OCI-LY7 (cell line): ENCODE measurements at regions of chr10 and their contacts with region 1.

Region 1: DNA sequence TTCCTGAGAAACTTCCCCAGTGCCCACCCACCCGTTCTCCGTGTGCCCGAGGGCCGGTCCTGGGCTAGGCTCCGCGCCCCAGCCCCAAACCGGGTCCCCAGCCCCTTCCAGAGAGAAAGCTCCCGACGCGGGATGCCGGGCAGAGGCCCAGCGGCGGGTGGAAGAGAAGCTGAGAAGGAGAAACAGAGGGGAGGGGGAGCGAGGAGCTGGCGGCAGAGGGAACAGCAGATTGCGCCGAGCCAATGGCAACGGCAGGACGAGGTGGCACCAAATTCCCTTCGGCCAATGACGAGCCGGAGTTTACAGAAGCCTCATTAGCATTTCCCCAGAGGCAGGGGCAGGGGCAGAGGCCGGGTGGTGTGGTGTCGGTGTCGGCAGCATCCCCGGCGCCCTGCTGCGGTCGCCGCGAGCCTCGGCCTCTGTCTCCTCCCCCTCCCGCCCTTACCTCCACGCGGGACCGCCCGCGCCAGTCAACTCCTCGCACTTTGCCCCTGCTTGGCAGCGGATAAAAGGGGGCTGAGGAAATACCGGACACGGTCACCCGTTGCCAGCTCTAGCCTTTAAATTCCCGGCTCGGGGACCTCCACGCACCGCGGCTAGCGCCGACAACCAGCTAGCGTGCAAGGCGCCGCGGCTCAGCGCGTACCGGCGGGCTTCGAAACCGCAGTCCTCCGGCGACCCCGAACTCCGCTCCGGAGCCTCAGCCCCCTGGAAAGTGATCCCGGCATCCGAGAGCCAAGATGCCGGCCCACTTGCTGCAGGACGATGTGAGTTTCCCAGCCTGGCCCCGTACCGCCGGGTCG is at the start of gene SCD:
- DNase-seq: peak; percentile 97
- H3K4me3 ChIP-seq: peak within 1 kb of the TSS; percentile 95
- H3K27ac ChIP-seq: peak within 1 kb of the TSS; percentile 64
- H3K4me1 ChIP-seq: peaks cover 55% of the 10 kb centered on the region
- CTCF ChIP-seq: no peak
- total RNA-seq, gene SCD: 66.1 and 76.8 TPM in 2 replicates

Region 2: DNA sequence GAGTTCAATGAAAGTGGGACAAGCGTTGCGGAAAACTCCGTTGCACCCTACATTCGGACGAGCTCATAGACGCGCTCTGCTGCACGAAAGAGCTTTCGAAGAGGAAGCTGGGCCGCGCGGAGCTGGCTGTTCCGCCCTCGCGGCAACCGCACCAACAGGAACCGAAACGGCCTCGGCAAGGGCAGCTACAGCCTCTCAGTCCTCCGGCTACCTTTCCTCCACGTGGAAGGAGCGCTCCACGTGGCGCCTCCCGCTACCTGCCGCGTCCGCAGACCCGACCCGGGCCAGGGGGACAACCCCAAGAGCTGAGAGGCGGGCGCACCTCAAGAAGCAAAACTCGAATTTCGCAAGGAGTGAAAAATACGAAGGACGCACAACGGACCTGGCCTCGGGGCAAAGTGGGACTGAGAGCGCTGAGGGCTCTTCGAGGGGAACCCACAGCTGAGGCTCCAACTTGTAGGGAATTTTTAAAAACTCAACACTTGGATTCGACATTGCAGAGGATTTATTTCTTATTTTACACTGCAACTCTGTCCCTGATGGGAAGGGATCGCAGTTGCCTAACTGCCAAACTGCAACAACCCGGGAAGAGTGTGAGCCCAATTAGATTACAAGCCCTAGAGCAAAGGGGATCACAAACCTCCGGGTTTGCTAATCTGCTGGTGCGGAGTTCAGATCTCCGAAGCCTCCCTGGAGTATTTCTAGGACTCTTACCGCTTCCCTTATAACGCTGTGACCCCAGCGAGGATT is 1112.8 kb before region 1 on chr10:
- CTCF ChIA-PET with region 1: interaction called, 16 read pairs
- POLR2A ChIA-PET with region 1: no interaction called
- intact Hi-C with region 1: no loop called
- DNase-seq: peak; percentile 61
- H3K4me3 ChIP-seq: no peak overlapping the region
- H3K27ac ChIP-seq: no peak overlapping the region
- H3K4me1 ChIP-seq: peaks cover 11% of the 10 kb centered on the region
- CTCF ChIP-seq: no peak

Region 3: GRCh38 chr10:100185364-100186252 is 161.4 kb before region 1 on chr10 and contains the start of gene ERLIN1:
- CTCF ChIA-PET with region 1: no interaction called
- POLR2A ChIA-PET with region 1: no interaction called
- intact Hi-C with region 1: loop called (anchors 2 kb)
- DNase-seq: peak; percentile 93
- H3K4me3 ChIP-seq: peak within 1 kb of the TSS; percentile 90
- H3K27ac ChIP-seq: peak within 1 kb of the TSS; percentile 85
- H3K4me1 ChIP-seq: peaks cover 36% of the 10 kb centered on the region
- CTCF ChIP-seq: peak; percentile 57
- total RNA-seq, gene ERLIN1: 24.7 and 26.7 TPM in 2 replicates

Region 4: DNA sequence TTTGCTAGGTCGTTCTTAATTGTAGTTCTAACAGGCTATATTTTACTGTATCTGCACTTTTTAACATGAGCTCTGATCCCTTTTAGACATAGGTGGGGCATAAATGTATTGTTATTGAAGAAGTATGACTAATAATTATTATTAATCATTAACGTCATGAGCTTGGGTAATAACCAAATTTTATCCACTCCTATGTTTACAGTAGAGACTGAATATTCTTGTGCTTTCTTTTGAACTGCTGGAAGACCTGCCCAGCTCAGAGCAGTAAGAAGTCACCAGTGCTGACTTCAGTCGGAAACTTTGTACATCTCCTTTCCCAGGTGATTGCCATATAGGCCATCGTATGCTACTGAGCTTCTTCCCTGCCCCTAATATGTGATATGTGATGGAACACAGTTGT is 35.7 kb before region 1 on chr10:
- CTCF ChIA-PET with region 1: no interaction called
- POLR2A ChIA-PET with region 1: no interaction called
- intact Hi-C with region 1: no loop called
- DNase-seq: no peak
- H3K4me3 ChIP-seq: no peak overlapping the region
- H3K27ac ChIP-seq: no peak overlapping the region
- H3K4me1 ChIP-seq: no peaks in the 10 kb centered on the region
- CTCF ChIP-seq: no peak

Region 5: DNA sequence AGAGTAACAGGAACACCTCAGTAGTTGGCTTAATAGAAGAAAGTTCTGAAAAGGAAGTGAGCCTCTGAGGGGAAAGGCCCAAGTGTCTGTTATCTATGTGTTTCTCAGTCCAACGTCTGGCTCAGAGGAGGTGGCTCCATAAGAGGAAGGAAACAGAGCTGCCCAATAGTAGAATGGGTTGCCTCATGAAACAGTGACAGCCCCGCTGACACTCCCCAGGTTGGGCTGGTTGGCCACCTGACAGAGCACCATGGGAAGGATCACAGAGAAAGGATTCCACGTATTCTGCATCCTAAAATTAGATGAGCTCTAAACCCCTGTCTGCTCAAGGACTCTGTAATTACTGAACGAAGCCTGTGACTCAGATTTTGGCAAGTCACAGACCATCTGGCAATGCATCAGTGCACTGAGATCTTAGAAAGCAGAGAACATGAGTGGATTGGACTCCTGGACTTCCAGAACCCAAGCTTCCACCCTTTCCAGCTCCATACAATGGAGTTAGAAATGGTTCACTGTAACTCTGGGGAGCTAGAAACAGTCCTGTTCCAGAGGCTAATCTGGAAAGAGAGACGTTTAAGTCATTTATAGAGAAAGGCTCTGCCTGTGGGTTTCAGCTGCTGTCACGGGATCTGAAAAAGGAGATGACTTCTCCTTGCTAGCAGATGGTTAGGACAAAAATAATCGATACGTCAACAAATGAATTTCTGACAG is 19.8 kb before region 1 on chr10:
- CTCF ChIA-PET with region 1: interaction called, 3 read pairs
- POLR2A ChIA-PET with region 1: interaction called, 52 read pairs
- intact Hi-C with region 1: no loop called
- DNase-seq: peak; percentile 79
- H3K4me3 ChIP-seq: no peak overlapping the region
- H3K27ac ChIP-seq: peak overlapping the region; percentile 36
- H3K4me1 ChIP-seq: peaks cover 16% of the 10 kb centered on the region
- CTCF ChIP-seq: no peak

Region 6: DNA sequence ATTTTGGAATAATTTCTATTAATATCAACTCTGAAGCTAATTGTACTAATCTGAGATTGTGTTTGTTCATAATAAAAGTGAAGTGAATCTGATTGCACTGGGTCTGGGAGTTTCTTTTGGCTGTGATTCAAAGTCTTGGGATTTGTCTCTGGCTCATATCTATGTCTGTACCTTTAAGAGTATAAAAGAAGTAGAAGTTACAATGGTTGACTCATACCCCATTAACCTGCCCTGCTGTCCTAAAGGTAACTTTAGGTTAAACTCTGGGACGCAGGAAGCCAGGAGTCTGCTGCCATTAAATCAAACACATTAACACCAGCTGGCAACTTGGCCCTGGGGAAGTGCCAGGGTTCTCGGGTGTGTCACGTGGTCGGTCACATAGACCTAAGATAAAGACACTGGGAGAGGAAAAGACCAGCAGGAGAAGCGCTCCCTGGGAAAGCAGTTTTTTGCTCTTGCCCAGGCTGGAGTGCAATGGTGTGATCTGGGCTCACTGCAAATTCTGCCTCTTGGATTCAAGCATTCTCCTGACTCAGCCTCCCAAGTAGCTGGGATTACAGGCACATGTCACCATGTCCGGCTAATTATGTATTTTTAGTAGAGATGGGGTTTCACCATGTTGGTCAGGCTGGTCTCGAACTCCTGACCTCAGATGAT is 17.9 kb after region 1 on chr10:
- CTCF ChIA-PET with region 1: interaction called, 9 read pairs
- POLR2A ChIA-PET with region 1: interaction called, 83 read pairs
- intact Hi-C with region 1: no loop called
- DNase-seq: no peak
- H3K4me3 ChIP-seq: no peak overlapping the region
- H3K27ac ChIP-seq: no peak overlapping the region
- H3K4me1 ChIP-seq: no peaks in the 10 kb centered on the region
- CTCF ChIP-seq: no peak

Region 7: GRCh38 chr10:100373298-100374136 is 26.6 kb after region 1 on chr10:
- CTCF ChIA-PET with region 1: interaction called, 9 read pairs
- POLR2A ChIA-PET with region 1: interaction called, 88 read pairs
- intact Hi-C with region 1: loop called (anchors 1 kb)
- DNase-seq: peak; percentile 89
- H3K4me3 ChIP-seq: peak overlapping the region; percentile 73
- H3K27ac ChIP-seq: peak overlapping the region; percentile 71
- H3K4me1 ChIP-seq: peaks cover 58% of the 10 kb centered on the region
- CTCF ChIP-seq: no peak

Region 8: DNA sequence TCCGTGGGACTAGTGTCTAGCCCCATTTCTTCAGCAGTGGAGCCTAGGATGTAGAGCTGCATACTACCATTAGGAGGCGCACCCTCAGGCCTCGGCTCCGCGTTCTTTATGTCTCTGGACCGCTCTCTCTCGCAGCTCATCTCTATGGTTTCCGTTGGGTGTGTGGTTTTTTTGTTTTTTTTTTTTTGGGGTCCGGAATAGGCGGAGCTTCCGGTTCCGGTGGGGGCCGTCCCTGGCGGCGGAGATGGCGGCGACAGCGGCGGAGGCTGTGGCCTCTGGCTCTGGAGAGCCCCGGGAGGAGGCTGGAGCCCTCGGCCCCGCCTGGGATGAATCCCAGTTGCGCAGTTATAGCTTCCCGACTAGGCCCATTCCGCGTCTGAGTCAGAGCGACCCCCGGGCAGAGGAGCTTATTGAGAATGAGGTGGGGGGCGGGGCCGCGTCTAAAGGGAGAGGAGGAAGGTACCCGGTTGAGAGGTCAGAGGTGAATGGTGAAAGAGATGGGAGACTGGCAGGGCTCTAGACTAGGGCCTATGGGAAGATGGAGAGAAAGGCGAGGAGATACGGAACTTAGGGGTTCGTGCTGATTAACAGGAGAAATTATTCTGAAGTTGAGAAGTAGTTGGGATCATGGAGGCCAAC is 188.9 kb after region 1 on chr10 and contains the start of gene HIF1AN:
- CTCF ChIA-PET with region 1: no interaction called
- POLR2A ChIA-PET with region 1: interaction called, 6 read pairs
- intact Hi-C with region 1: loop called (anchors 2 kb)
- DNase-seq: peak; percentile 97
- H3K4me3 ChIP-seq: peak within 1 kb of the TSS; percentile 84
- H3K27ac ChIP-seq: peak within 1 kb of the TSS; percentile 58
- H3K4me1 ChIP-seq: peaks cover 34% of the 10 kb centered on the region
- CTCF ChIP-seq: peak; percentile 95
- total RNA-seq, gene HIF1AN: 9.1 and 10.6 TPM in 2 replicates